Activated naive CD4-positive, alpha-beta T cell treated with anti-CD3 and anti-CD28 coated beads for 36 hours (primary cell): ENCODE measurements at regions of chr5 and their contacts with region 1.

Region 1: GRCh38 chr5:52799983-52800393 is 12.3 kb downstream of the ITGA1 start:
- DNase-seq: peak; percentile 95
- H3K4me3 Mint-ChIP-seq: peak overlapping the region; percentile 93
- H3K27ac Mint-ChIP-seq: peak overlapping the region; percentile 93
- H3K4me1 Mint-ChIP-seq: peaks cover 46% of the 10 kb centered on the region
- H3K27me3 Mint-ChIP-seq: no peaks in the 10 kb centered on the region

Region 2: DNA sequence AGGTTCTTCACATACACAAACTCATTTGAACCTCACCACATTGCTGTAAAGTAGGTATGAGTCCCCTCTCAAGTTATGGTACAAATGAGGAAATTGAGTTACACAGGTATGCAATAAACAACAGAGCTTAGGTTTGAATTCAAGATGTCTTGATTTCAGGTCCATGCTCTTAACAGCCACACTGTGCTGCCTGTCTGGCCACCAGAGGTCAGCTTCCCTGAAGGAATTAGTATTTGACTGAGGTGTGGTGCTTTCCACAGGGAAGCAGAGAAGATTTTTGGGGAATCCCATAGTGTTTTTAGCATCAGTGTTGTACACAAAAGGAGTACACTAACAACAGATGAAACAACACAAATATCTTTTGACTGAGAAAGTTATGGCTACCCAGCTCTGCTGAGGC is 106.7 kb before region 1 on chr5:
- CTCF ChIA-PET with region 1: interaction called, 5 read pairs
- intact Hi-C with region 1: loop called (anchors 1 kb)
- DNase-seq: peak; percentile 59
- H3K4me3 Mint-ChIP-seq: no peak overlapping the region
- H3K27ac Mint-ChIP-seq: no peak overlapping the region
- H3K4me1 Mint-ChIP-seq: no peaks in the 10 kb centered on the region
- H3K27me3 Mint-ChIP-seq: no peaks in the 10 kb centered on the region

Region 3: DNA sequence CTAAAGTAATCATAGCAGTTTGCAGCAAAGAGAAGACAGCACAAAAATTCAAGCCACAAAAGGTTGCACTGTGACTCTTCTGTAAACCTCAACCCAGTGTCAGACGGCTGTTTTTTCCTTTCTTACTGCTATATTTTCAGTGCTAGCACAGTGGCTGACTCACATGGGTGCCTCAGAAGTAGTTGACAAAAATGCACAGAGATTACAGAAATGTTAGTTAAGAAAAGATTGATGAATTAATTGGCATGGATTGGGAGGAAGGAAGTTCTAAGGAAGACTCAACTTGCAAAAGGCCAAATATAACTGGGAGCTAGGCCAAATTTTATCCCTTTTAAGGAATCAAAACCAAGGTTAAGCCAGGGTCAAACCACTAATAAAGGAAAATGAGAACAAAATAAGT is 56.0 kb before region 1 on chr5:
- CTCF ChIA-PET with region 1: no interaction called
- intact Hi-C with region 1: loop called (anchors 1 kb)
- DNase-seq: peak; percentile 66
- H3K4me3 Mint-ChIP-seq: no peak overlapping the region
- H3K27ac Mint-ChIP-seq: peak overlapping the region; percentile 32
- H3K4me1 Mint-ChIP-seq: peaks cover 44% of the 10 kb centered on the region
- H3K27me3 Mint-ChIP-seq: no peaks in the 10 kb centered on the region

Region 4: DNA sequence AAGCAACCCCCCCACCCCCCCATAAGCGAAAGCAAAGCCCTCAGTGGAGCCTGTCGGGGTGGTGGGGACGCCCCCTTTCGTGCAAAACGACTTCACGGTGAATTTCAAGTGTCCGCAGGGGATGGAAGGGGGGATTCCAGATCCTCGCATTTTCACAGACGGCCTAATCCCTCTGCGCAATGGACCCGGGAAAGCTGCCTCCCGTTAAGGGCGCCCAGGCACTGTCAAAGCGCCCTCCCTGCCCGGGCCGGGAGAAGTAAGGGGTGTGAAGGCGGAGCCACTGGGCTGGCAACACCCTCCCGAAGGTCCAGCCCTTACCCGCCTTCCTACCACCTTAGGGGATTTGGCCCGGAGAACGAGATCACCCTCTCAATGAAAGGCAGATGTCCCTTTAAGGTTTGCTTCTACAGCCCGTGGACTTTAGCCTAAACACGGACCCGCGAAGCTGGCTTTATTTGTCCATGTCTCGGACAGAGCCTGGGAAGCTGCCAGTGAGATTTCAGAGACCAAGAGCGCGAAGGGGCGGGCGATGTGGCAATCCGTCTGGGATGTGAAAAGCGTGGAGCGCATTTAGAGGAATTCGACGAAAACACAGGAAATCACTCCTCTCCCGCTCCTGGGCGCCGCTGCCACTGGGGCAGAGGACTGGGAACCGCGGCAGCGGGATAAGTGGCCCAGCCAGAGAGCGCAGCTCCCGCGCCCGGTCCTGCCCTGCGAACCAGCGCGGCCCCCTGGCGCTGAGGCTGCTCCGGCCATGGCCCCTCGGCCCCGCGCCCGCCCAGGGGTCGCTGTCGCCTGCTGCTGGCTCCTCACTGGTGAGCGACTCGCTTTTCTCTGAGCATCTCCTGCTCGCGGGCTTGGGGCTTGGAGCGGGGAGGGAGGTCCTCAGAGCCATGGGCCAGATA is 12.1 kb before region 1 on chr5 and contains the starts of genes ITGA1 and PELO:
- CTCF ChIA-PET with region 1: interaction called, 11 read pairs
- intact Hi-C with region 1: loop called (anchors 1 kb)
- DNase-seq: peak; percentile 79
- H3K4me3 Mint-ChIP-seq: peak within 1 kb of the TSS; percentile 84
- H3K27ac Mint-ChIP-seq: peak within 1 kb of the TSS; percentile 44
- H3K4me1 Mint-ChIP-seq: peaks cover 15% of the 10 kb centered on the region
- H3K27me3 Mint-ChIP-seq: peaks cover 4% of the 10 kb centered on the region
- total RNA-seq, gene ITGA1: 0.69 to 1.2 TPM
- total RNA-seq, gene PELO: 11.4 to 12.8 TPM

Region 5: DNA sequence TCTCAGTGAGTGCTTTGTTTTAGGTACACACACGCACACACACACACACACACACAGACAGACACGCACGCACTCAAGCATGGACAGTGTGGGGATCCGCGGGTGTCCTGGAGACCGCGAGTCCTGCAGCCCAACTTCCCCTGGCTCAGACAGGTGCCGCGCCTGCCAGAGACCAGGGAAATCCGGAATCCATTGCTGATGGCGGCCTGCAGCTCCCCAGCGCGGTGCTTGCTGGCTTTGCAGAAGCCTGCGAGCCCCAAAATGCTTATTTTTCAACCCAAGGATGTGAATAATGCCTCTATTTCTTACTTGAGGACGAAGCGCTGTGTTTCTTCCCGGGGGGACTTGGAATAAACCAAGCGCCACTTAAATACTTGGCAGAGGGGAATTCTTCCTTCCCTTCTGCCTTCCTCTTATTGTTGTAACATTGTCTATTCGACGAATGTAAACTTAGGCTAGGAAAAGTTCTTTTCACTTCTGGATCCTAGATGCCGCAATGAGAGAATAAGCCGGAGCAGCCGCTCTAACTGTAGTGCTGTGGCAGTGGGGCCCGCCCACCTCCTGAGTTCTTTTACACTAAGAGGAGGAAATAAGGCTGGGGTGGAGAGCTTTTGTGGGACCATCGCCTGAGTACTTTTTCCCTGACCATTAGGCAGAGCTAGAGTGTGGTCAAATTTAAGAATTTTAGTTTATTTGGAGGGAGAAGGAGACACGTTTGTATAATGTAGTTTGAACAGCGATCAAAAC is 190.0 kb after region 1 on chr5:
- CTCF ChIA-PET with region 1: interaction called, 3 read pairs
- intact Hi-C with region 1: loop called (anchors 5 kb)
- DNase-seq: peak; percentile 73
- H3K4me3 Mint-ChIP-seq: peak overlapping the region; percentile 79
- H3K27ac Mint-ChIP-seq: peak overlapping the region; percentile 50
- H3K4me1 Mint-ChIP-seq: peaks cover 21% of the 10 kb centered on the region
- H3K27me3 Mint-ChIP-seq: peaks cover 4% of the 10 kb centered on the region

Region 6: DNA sequence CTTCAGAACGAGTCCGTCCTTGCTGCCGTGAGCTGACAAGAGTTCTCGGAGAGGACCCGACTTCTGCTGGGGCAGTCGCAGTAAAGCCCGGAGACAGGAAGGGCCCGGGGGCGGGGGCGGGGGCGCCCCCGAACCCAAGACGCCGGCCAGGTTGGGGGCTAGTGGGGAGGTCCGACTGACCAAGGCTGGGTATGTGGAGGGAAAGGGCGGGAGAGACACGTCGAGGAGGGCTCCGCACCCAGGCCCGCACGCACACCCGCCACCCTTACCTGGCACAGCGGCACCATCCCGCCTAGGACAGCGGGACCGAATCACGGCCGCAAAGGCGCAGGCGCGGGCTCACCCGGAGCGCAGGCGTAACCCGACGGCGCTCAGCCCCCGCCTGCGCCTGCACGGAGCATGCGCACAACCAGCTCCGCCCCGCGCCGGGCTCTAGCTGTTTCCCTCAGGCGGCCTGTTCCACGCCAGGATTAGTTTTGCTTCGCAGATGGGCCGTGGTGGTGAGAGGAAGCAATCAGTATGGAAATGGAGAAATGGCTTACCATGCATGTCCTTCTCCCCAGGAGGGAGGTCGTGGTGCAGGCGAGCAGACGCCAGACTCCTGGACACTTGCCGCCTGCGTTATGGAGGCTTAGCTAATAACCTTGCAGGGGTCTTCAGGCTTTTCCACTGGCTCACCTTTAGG is 309.6 kb after region 1 on chr5 and contains the start of gene MOCS2:
- CTCF ChIA-PET with region 1: no interaction called
- intact Hi-C with region 1: loop called (anchors 2 kb)
- DNase-seq: peak; percentile 91
- H3K4me3 Mint-ChIP-seq: peak within 1 kb of the TSS; percentile 92
- H3K27ac Mint-ChIP-seq: peak within 1 kb of the TSS; percentile 86
- H3K4me1 Mint-ChIP-seq: peaks cover 37% of the 10 kb centered on the region
- H3K27me3 Mint-ChIP-seq: no peaks in the 10 kb centered on the region
- total RNA-seq, gene MOCS2: 29.4 to 30.9 TPM